Breast epithelium (tissue), 4 donors: ENCODE measurements at regions of chr22 and their contacts with region 1.

Region 1: GRCh38 chr22:32341122-32341740 is 16.4 kb upstream of the RFPL3 start:
- DNase-seq: no peak
- H3K4me3 ChIP-seq: no peak overlapping the region
- H3K27ac ChIP-seq: no peak overlapping the region
- H3K4me1 ChIP-seq: no peaks in the 10 kb centered on the region
- H3K27me3 ChIP-seq: peaks cover 0 to 16% of the 10 kb centered on the region in 2 donors
- CTCF ChIP-seq: no peak
- POLR2A ChIP-seq: no peak

Region 2: DNA sequence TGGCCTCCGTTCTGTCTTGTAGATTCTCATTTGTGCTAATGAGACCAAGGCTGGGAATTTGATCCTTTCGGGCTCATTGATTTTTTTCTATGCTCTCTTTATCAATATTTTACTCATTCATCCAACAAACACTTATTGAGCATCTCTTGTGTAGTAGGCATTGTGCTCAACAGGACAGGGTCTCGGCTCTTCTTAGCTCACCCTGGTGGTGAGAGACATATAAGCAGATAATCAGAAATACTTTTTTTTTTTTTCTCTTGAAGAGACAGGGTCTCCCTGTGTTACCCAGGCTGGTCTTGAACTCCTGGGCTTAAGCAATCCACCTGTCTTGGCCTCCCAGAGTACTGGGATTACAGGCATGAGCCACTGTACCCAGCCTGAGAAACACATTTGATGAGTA is 346.2 kb before region 1 on chr22:
- intact Hi-C with region 1: no loop called
- DNase-seq: no peak
- H3K4me3 ChIP-seq: no peak overlapping the region
- H3K27ac ChIP-seq: no peak overlapping the region
- H3K4me1 ChIP-seq: no peaks in the 10 kb centered on the region
- H3K27me3 ChIP-seq: no peaks in the 10 kb centered on the region
- CTCF ChIP-seq: no peak
- POLR2A ChIP-seq: no peak

Region 3: GRCh38 chr22:34198976-34199375 is 1857.7 kb after region 1 on chr22:
- intact Hi-C with region 1: loop called (anchors 5 kb)
- DNase-seq: no peak
- H3K4me3 ChIP-seq: no peak overlapping the region
- H3K27ac ChIP-seq: no peak overlapping the region
- H3K4me1 ChIP-seq: no peaks in the 10 kb centered on the region
- H3K27me3 ChIP-seq: no peaks in the 10 kb centered on the region
- CTCF ChIP-seq: no peak
- POLR2A ChIP-seq: no peak